IMR-90 (cell line): ENCODE measurements at regions of chr17 and their contacts with region 1.

Region 1: DNA sequence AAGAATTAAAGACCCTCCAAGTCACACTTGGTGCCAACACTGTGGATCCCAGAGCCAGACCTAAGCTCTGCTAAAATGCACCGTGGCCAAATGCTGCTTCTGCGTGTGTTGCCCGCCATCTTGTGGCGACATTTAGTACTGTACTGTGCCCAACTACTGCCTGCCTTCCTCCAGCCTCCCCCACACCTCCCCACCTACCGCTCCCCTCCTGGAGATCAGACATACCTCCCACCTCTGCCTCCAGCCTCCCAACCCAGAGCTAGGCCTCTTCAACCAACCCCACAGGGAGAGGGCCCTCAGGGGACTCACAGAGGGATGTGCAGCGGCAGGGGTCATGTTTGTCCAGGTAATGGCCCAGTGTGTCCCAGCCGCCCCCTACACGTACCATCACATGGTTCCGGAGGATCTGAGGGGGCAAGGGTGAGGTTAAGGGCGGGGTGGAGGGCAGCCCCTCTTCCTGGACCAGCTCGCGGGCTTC is 5.5 kb downstream of the GAS2L2 start:
- DNase-seq: peak; percentile 75
- ATAC-seq: peak; percentile 92
- H3K4me3 ChIP-seq: no peak overlapping the region
- H3K27ac ChIP-seq: no peak overlapping the region
- H3K4me1 ChIP-seq: peaks cover 8% of the 10 kb centered on the region; the same call in 1 of the 2 replicates
- H3K27me3 ChIP-seq: peaks cover 41% of the 10 kb centered on the region
- CTCF ChIP-seq: peak; percentile 92
- POLR2A ChIP-seq: peak; percentile 49; the same call in 1 of the 2 replicates
- RAD21 ChIP-seq: peak; percentile 97

Region 2: DNA sequence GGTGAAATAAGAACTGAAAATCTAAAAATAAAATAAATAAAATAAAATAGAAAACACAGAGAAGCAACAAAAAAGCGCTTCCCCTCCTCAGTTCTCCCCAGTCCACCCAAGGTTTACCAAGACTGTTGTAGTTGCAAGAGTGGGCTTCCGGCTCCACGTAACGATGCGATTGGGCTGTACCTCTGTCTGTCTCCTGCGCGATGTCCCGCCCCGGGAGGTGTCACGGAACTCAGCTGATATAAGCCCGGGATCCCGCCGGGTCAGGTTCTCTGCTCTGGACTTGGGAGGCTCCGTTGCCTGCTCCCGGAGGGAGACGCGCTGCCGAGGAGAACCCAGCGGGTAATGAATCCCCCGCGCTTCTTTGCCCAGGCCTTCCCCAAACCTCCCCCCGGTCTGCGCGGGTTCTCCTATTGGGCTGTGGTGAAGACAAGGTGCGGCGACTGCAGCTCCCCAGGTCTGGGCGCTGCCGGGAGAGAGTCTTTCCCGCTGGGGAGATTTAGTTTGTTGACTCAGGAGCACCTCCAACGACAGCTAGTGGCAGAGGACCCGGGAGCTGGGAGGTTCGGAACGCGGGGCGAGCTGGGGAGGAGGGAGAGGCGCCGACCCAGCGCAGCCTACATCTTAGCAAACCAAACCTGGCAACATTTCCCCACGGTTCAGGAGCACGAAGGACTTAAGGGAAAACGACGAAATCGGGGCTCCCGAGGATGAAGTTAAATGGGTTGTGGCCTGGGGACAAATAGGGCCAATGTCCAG is 504.6 kb before region 1 on chr17 and contains the start of gene SLFN5:
- CTCF ChIA-PET with region 1: no interaction called
- POLR2A ChIA-PET with region 1: no interaction called
- dilution Hi-C with region 1: no loop called
- in situ Hi-C with region 1: no loop called
- intact Hi-C with region 1: loop called (anchors 10 kb)
- DNase-seq: peak; percentile 90
- ATAC-seq: peak; percentile 79
- H3K4me3 ChIP-seq: peak within 1 kb of the TSS; percentile 59
- H3K27ac ChIP-seq: peak within 1 kb of the TSS; percentile 85
- H3K4me1 ChIP-seq: peaks cover 5% of the 10 kb centered on the region
- H3K27me3 ChIP-seq: no peaks in the 10 kb centered on the region
- CTCF ChIP-seq: no peak
- POLR2A ChIP-seq: peak; percentile 99
- RAD21 ChIP-seq: 0 out of 2 replicates have a peak, but pooled peaks have one; percentile 5
- total RNA-seq, gene SLFN5: 48.9 and 64.2 TPM in 2 replicates

Region 3: DNA sequence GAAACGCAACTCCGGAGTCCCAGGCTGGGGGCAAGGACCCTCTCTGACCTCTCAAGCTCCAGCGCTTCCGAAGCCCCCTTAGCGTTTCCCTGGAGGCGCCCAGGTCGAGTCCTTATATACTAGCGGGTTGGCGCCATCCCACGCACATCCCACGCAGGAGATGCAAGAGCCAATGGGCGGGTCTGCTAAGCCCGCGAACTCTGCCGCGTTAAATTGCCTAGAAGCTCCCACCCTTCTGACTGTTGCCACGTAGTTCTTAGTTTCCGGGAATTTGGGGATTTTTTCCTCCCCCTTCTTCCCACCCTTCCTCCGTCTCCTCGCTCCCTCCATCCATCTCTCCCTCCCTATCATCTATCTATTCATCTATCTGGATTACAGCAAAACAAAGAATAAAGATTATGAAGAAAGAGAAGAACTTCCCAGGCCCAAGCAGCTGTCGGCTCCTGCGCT is 374.0 kb before region 1 on chr17 and contains the start of gene SLFN11:
- CTCF ChIA-PET with region 1: no interaction called
- POLR2A ChIA-PET with region 1: no interaction called
- dilution Hi-C with region 1: no loop called
- in situ Hi-C with region 1: loop called (anchors 25 kb)
- intact Hi-C with region 1: no loop called
- DNase-seq: peak; percentile 97
- ATAC-seq: peak; percentile 88
- H3K4me3 ChIP-seq: peak within 1 kb of the TSS; percentile 82
- H3K27ac ChIP-seq: peak within 1 kb of the TSS; percentile 91
- H3K4me1 ChIP-seq: no peaks in the 10 kb centered on the region
- H3K27me3 ChIP-seq: no peaks in the 10 kb centered on the region
- CTCF ChIP-seq: no peak
- POLR2A ChIP-seq: peak; percentile 99
- RAD21 ChIP-seq: no peak
- total RNA-seq, gene SLFN11: 114 and 144 TPM in 2 replicates

Region 4: GRCh38 chr17:35540589-35541404 is 206.8 kb before region 1 on chr17:
- CTCF ChIA-PET with region 1: interaction called, 4 read pairs
- POLR2A ChIA-PET with region 1: no interaction called
- dilution Hi-C with region 1: no loop called
- in situ Hi-C with region 1: no loop called
- intact Hi-C with region 1: loop called (anchors 1 kb)
- DNase-seq: peak; percentile 51
- ATAC-seq: peak; percentile 78
- H3K4me3 ChIP-seq: peak overlapping the region; percentile 41; the same call in 1 of the 2 replicates
- H3K27ac ChIP-seq: peak overlapping the region; percentile 82; the same call in 1 of the 2 replicates
- H3K4me1 ChIP-seq: no peaks in the 10 kb centered on the region
- H3K27me3 ChIP-seq: no peaks in the 10 kb centered on the region; the same call in 1 of the 2 replicates
- CTCF ChIP-seq: no peak
- POLR2A ChIP-seq: no peak
- RAD21 ChIP-seq: no peak

Region 5: GRCh38 chr17:35612924-35613521 is 134.6 kb before region 1 on chr17:
- CTCF ChIA-PET with region 1: interaction called, 6 read pairs
- POLR2A ChIA-PET with region 1: no interaction called
- dilution Hi-C with region 1: no loop called
- in situ Hi-C with region 1: no loop called
- intact Hi-C with region 1: loop called (anchors 1 kb)
- DNase-seq: peak; percentile 65
- ATAC-seq: peak; percentile 80
- H3K4me3 ChIP-seq: no peak overlapping the region
- H3K27ac ChIP-seq: no peak overlapping the region
- H3K4me1 ChIP-seq: peaks cover 1% of the 10 kb centered on the region
- H3K27me3 ChIP-seq: no peaks in the 10 kb centered on the region
- CTCF ChIP-seq: peak; percentile 67
- POLR2A ChIP-seq: no peak
- RAD21 ChIP-seq: peak; percentile 65